Gastrocnemius medialis (tissue), 4 donors: ENCODE measurements at regions of chr17 and their contacts with region 1.

Region 1: DNA sequence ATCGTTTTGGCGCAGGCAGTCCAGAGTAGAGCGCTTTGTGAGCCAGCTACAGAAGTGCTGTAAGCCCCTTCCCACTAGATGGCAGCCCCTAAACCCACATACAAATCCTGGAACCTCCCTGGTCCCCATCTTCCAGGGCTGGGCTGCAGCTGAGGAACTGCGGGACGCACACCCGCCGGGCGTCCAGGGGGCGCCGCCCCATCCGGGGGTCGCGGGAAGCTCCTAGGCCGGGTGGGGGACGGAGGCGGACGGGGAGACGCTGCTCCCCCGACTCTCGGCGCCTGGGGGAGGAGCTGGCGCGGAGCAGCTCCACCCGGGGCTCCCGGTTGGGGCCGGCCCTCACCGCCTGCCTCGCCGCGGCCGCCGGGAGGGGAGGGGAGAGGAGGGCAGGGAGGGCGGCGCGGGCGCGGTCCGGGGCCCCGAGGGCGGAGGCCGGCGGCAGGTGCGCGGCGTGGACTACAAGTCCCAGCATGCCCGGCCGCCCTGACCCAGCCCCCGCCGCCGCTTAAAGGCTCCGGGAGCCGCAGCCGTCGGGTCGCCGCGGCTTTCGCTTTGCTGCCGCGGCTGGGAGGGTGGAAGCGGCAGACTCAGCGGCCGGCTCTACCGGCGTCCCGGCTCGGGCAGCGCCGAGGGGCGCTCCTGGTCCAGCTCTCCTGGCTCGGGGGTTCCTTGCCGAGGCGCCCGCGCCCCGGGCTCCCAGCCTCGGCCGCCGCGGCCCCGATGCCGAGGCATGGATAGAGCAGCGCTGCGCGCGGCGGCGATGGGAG is at the start of gene KSR1:
- DNase-seq: peak; percentile 44 to 67
- ATAC-seq: peak; percentile 86 to 91
- H3K4me3 ChIP-seq: peak within 1 kb of the TSS; percentile 73 to 92 (median 86)
- H3K27ac ChIP-seq: peak within 1 kb of the TSS; percentile 71 to 82 (median 78)
- H3K4me1 ChIP-seq: peaks cover 4 to 10% of the 10 kb centered on the region in 2 donors
- H3K27me3 ChIP-seq: no peaks in the 10 kb centered on the region
- CTCF ChIP-seq: peak in 3 of 5 experiments; percentile 34 to 44 (median 38)
- POLR2A ChIP-seq: peak; percentile 69 to 89
- total RNA-seq, gene KSR1: 10.4 to 17.7 (median 13.2) TPM

Region 2: GRCh38 chr17:27381007-27381501 is 75.0 kb before region 1 on chr17:
- in situ Hi-C with region 1: no loop called
- intact Hi-C with region 1: loop called (anchors 5 kb)
- DNase-seq: peak; percentile 17 to 40
- ATAC-seq: peak in 1 of 2 donors; percentile 40
- H3K4me3 ChIP-seq: no peak overlapping the region
- H3K27ac ChIP-seq: no peak overlapping the region
- H3K4me1 ChIP-seq: peaks cover 10 to 13% of the 10 kb centered on the region in 2 donors
- H3K27me3 ChIP-seq: peaks cover 0 to 8% (median 0%) of the 10 kb centered on the region in 3 donors
- CTCF ChIP-seq: peak; percentile 66 to 84 (median 76)
- POLR2A ChIP-seq: no peak

Region 3: GRCh38 chr17:27489045-27489715 is 33.1 kb after region 1 on chr17:
- in situ Hi-C with region 1: no loop called
- intact Hi-C with region 1: no loop called
- DNase-seq: peak; percentile 33 to 60
- ATAC-seq: peak; percentile 47 to 76
- H3K4me3 ChIP-seq: no peak overlapping the region
- H3K27ac ChIP-seq: no peak overlapping the region
- H3K4me1 ChIP-seq: peaks cover 14 to 20% of the 10 kb centered on the region in 2 donors
- H3K27me3 ChIP-seq: no peaks in the 10 kb centered on the region
- CTCF ChIP-seq: no peak
- POLR2A ChIP-seq: no peak

Region 4: GRCh38 chr17:27609611-27610303 is 153.7 kb after region 1 on chr17:
- in situ Hi-C with region 1: no loop called
- intact Hi-C with region 1: no loop called
- DNase-seq: no peak
- ATAC-seq: peak in 1 of 2 donors; percentile 58
- H3K4me3 ChIP-seq: no peak overlapping the region
- H3K27ac ChIP-seq: no peak overlapping the region
- H3K4me1 ChIP-seq: no peaks in the 10 kb centered on the region
- H3K27me3 ChIP-seq: no peaks in the 10 kb centered on the region
- CTCF ChIP-seq: peak in 4 of 5 experiments; percentile 28 to 42 (median 39)
- POLR2A ChIP-seq: no peak